MCF 10A (cell line): ENCODE measurements at regions of chr22 and their contacts with region 1.

Region 1: DNA sequence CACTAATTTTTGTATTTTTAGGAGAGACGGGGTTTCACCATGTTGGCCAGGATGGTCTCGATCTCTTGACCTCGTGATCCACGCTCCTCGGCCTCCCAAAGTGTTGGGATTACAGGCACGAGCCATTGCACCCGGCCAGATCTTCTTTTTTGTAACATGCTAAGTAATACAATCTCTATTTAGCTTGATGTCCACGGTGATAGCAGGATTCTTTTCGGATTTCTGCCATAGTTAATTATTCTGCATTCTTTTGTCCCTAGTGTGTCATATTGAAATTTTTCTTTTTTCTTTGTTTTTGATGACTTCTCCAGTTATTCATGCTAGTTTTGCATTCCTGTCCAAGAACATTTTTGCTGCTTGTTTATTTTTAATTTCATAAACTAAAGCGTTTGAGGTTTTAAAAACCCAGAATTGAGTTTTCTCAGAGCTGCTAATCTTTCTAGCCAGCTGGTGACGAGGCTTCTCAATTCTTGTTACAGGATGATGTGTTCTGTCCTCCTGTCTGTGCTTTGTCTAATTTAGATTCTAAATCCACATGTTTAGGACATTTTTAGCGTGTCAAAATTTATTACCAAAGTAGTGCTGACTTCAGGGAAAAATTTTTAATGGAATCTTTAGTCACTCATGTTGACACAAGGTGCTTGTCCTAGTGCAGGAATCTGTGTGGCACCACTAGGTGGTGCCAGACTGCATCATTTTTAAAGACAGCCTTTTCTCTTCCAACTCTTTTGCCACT is 21.8 kb downstream of the NF2 start:
- DNase-seq: peak; percentile 76
- H3K4me3 Mint-ChIP-seq: peak overlapping the region; percentile 11
- H3K27ac Mint-ChIP-seq: peak overlapping the region; percentile 53
- H3K4me1 Mint-ChIP-seq: peaks cover 57% of the 10 kb centered on the region
- H3K27me3 Mint-ChIP-seq: no peaks in the 10 kb centered on the region
- CTCF ChIP-seq: peak; percentile 78

Region 2: DNA sequence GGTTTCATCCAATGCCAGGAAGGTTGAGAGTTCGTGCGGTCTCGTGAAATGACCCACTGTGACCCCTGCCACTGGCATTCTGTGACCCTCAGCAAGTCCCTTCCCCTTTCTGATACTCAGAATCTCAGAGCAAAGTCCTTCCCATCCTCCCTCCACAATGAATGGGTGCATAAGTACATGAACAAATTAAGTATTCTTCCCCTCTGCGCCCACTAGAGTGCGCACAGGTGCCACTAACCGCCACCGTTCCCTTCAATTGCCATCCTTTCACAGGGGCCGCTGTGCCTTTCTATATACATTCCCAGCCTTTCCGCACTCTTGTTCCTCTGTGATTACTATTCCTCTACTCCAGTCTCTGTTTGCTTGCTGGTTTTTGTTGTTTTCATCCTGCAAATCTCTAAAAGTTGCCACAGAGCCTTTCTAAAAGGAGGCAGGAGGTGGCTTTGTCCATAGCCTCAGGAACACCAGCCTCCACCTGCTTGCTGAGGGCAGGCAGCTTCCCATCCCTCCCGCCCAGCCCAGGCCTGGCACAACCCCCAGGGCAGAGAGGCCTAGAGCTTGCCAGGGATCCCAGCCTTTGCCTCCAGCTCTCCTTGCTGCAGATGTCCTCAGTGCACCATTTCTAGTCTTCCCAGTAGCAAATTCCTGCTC is 230.2 kb before region 1 on chr22:
- CTCF ChIA-PET with region 1: interaction called, 3 read pairs
- POLR2A ChIA-PET with region 1: no interaction called
- intact Hi-C with region 1: loop called (anchors 2 kb)
- DNase-seq: peak; percentile 75
- H3K4me3 Mint-ChIP-seq: no peak overlapping the region
- H3K27ac Mint-ChIP-seq: no peak overlapping the region
- H3K4me1 Mint-ChIP-seq: peaks cover 13% of the 10 kb centered on the region
- H3K27me3 Mint-ChIP-seq: peaks cover 2% of the 10 kb centered on the region
- CTCF ChIP-seq: peak; percentile 71

Region 3: GRCh38 chr22:29587938-29588699 is 37.1 kb before region 1 on chr22:
- CTCF ChIA-PET with region 1: interaction called, 6 read pairs
- POLR2A ChIA-PET with region 1: interaction called, 5 read pairs
- intact Hi-C with region 1: loop called (anchors 1 kb)
- DNase-seq: peak; percentile 92
- H3K4me3 Mint-ChIP-seq: no peak overlapping the region
- H3K27ac Mint-ChIP-seq: no peak overlapping the region
- H3K4me1 Mint-ChIP-seq: no peaks in the 10 kb centered on the region
- H3K27me3 Mint-ChIP-seq: no peaks in the 10 kb centered on the region
- CTCF ChIP-seq: no peak

Region 4: DNA sequence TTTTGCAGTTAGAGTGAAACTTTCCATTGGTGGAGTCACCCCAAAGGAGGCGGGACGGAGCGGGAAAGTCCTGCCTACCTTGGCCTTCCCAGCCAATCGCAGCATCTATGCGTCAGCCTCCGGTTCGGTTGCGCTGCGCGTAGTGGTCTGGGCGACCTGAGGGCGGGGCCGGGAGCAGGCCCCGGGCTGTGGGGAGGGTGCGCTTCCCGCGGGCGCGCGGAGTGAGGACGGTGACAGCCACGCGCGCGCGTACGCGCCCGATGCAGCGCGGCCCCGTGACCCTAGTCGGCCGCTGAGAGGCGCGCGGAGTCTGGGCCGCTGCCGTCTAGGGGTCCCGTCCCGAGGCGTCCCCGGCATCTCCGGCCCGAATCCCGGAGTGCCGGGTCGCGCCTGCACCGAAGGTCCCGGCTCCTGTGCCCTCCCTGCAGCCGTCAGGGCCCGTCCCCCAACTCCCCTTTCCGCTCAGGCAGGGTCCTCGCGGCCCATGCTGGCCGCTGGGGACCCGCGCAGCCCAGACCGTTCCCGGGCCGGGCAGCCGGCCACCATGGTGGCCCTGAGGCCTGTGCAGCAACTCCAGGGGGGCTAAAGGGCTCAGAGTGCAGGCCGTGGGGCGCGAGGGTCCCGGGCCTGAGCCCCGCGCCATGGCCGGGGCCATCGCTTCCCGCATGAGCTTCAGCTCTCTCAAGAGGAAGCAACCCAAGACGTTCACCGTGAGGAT is 21.7 kb before region 1 on chr22 and contains the start of gene NF2:
- CTCF ChIA-PET with region 1: interaction called, 24 read pairs
- POLR2A ChIA-PET with region 1: interaction called, 21 read pairs
- intact Hi-C with region 1: no loop called
- DNase-seq: peak; percentile 41
- H3K4me3 Mint-ChIP-seq: peak within 1 kb of the TSS; percentile 87
- H3K27ac Mint-ChIP-seq: peak within 1 kb of the TSS; percentile 98
- H3K4me1 Mint-ChIP-seq: peaks cover 5% of the 10 kb centered on the region
- H3K27me3 Mint-ChIP-seq: no peaks in the 10 kb centered on the region
- CTCF ChIP-seq: no peak
- total RNA-seq, gene NF2: 92.4 and 98.3 TPM in 2 replicates

Region 5: DNA sequence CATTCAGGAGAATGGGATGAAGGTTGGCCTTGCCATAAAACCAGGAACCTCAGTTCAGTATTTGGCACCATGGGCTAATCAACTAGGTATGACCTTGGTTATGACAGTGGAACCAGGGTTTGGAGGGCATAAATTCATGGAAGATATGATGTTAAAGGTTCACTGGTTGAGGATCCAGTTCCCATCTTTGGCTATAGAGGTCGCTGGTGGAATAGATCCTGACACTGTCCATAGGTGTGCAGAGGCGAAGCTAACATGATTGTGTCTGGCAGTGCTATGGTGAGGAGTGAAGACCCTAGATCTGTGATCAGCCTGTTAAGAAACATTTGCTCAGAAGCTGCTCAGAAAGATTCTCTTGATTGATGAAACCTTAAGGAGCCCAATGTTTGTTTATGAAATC is 16.1 kb before region 1 on chr22:
- CTCF ChIA-PET with region 1: interaction called, 24 read pairs
- POLR2A ChIA-PET with region 1: interaction called, 21 read pairs
- intact Hi-C with region 1: no loop called
- DNase-seq: no peak
- H3K4me3 Mint-ChIP-seq: no peak overlapping the region
- H3K27ac Mint-ChIP-seq: no peak overlapping the region
- H3K4me1 Mint-ChIP-seq: peaks cover 12% of the 10 kb centered on the region
- H3K27me3 Mint-ChIP-seq: no peaks in the 10 kb centered on the region
- CTCF ChIP-seq: no peak

Region 6: GRCh38 chr22:29635734-29636357 is 10.6 kb after region 1 on chr22:
- CTCF ChIA-PET with region 1: interaction called, 39 read pairs
- POLR2A ChIA-PET with region 1: interaction called, 3 read pairs
- intact Hi-C with region 1: loop called (anchors 1 kb)
- DNase-seq: peak; percentile 56
- H3K4me3 Mint-ChIP-seq: no peak overlapping the region
- H3K27ac Mint-ChIP-seq: no peak overlapping the region
- H3K4me1 Mint-ChIP-seq: peaks cover 12% of the 10 kb centered on the region
- H3K27me3 Mint-ChIP-seq: no peaks in the 10 kb centered on the region
- CTCF ChIP-seq: peak; percentile 57